GM10248 (cell line): ENCODE measurements at regions of chr16 and their contacts with region 1.

Region 1: GRCh38 chr16:2459647-2460390 is at the start of gene TEDC2:
- DNase-seq: peak; percentile 100
- CTCF ChIP-seq: no peak

Region 2: DNA sequence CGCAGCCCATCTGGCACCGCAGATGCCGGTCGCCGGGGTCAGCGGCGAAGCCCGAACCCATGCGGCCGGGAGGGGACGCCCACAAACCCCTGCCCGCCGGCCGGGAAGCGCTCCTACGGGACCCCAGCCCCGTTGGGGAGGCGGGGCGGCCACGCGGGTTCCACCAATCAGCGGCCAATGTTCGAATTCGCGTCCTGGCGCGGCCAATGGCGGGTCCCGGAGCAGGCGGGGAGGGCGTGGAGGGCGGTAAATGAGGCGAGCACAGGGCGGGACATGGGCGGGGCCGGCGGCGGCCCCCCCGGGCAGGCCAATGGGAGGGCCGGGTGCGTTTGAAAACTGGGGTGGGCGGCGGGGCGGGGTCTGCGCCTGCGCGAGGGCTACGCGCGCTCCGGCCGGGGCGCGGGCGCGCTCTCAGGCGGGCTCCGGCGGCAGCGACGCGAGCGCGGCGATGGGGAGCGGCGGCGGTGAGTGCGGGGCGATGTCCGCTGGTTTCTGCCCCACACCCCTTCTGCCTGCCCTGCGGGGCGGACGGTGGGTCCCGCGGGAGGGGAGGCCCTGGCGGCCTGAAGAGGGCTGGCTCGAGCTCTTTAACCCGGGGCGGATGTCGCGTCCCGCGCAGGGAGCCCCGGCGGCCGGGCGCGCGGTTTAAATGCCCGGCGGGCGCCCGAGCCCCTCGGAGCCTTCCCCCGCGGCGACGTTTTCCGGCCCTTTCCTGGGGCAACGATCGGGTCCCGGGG is 30.6 kb before region 1 on chr16 and contains the start of gene CCNF:
- CTCF ChIA-PET with region 1: interaction called, 11 read pairs
- POLR2A ChIA-PET with region 1: no interaction called
- DNase-seq: peak; percentile 100
- CTCF ChIP-seq: no peak

Region 3: DNA sequence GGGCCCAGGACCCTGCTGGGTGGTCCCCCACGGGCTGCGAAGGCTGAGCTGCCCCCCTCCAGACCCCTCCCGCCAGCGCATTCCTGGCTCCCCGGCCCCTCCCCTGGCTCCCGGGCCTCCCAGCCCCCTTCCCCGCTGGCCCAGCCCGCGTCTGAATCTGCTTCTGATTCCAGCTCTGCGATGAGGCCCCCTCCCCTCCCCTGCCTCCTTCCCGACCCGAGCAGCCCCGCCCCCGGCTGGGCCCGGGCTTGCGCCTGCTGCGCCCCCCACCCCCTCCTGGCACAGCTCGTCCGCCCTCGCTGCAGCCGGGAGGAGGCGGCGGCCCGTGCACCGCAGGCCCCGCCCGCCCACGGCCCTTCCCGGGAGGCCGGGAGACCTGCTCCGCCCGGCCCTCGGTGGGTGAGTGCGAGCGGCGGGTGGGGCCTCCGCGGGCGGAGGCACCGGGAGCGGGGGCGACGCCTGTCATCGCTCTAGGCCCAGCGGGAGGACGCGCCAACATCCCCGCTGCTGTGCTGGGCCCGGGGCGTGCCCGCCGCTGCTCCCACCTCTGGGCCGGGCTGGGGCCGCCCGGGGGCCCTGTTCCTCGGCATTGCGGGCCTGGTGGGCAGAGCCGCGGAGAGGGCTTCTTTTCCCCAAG is 11.3 kb after region 1 on chr16 and contains the start of gene NTN3:
- CTCF ChIA-PET with region 1: interaction called, 11 read pairs
- POLR2A ChIA-PET with region 1: interaction called, 3 read pairs
- DNase-seq: no peak
- CTCF ChIP-seq: no peak

Region 4: DNA sequence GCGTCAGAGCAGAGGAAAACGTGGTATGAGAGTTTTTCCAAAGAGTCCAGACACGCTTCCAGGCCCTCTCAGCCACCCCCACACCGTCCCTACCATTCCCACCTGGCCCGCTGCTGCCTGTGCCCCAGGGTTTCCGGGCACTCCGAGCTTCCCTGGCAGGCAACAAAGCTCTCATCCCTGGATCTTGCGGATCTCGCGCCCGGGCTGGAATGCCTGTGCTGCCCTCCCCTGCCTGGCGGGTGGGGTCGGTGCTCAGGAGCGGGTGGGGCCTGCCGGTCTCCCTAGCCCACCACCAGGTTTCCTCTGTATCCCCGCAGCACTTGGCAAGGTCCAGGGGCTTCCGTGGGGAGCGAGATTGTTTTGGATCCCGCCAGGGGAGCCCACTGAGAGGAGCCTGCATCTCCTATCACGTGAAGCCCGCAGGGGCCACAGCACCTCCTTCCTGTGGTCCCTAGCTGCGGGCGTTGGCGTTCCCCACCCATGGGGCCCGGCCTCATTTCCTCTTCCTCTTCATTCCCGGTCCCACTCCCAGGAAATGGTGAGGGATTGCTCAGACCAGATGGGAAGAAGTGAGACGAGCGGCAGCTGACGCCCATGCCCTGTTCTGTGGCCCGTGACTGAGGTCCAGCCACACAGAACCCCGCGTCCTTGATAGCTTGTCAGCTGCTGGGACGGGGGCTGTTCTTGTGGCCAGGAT is 26.1 kb after region 1 on chr16:
- CTCF ChIA-PET with region 1: no interaction called
- POLR2A ChIA-PET with region 1: no interaction called
- DNase-seq: no peak
- CTCF ChIP-seq: no peak